Naive thymus-derived CD4-positive, alpha-beta T cell (primary cell): ENCODE measurements at regions of chr7 and their contacts with region 1.

Region 1: GRCh38 chr7:44858161-44858560 is 10.3 kb upstream of the H2AZ2 start:
- DNase-seq: no peak
- ATAC-seq: no peak
- H3K4me3 ChIP-seq: no peak overlapping the region
- H3K4me3 Mint-ChIP-seq: no peak overlapping the region
- H3K27ac ChIP-seq: no peak overlapping the region
- H3K27ac Mint-ChIP-seq: peak overlapping the region in 1 of 9 donors; percentile 9
- H3K4me1 ChIP-seq: peaks cover 0 to 4% of the 10 kb centered on the region in 2 donors
- H3K4me1 Mint-ChIP-seq: peaks cover 0 to 21% (median 5%) of the 10 kb centered on the region in 7 donors
- H3K27me3 ChIP-seq: no peaks in the 10 kb centered on the region
- H3K27me3 Mint-ChIP-seq: peaks cover 0 to 6% (median 0%) of the 10 kb centered on the region in 5 donors

Region 2: GRCh38 chr7:44587843-44588711 is 270.1 kb before region 1 on chr7:
- CTCF ChIA-PET with region 1: no interaction called
- POLR2A ChIA-PET with region 1: no interaction called
- intact Hi-C with region 1: loop called in 1 of 2 experiments (anchors 1 kb)
- DNase-seq: peak in 7 of 9 donors; percentile 35 to 63 (median 60)
- ATAC-seq: peak; percentile 90
- H3K4me3 ChIP-seq: no peak overlapping the region
- H3K4me3 Mint-ChIP-seq: no peak overlapping the region
- H3K27ac ChIP-seq: no peak overlapping the region
- H3K27ac Mint-ChIP-seq: peak overlapping the region in 3 of 9 donors; percentile 6 to 71 (median 25)
- H3K4me1 ChIP-seq: peaks cover 0 to 4% of the 10 kb centered on the region in 2 donors
- H3K4me1 Mint-ChIP-seq: peaks cover 0 to 18% (median 6%) of the 10 kb centered on the region in 7 donors
- H3K27me3 ChIP-seq: no peaks in the 10 kb centered on the region
- H3K27me3 Mint-ChIP-seq: peaks cover 0 to 9% (median 0%) of the 10 kb centered on the region in 5 donors

Region 3: GRCh38 chr7:44678471-44679179 is 179.5 kb before region 1 on chr7:
- CTCF ChIA-PET with region 1: no interaction called
- POLR2A ChIA-PET with region 1: no interaction called
- intact Hi-C with region 1: no loop called
- DNase-seq: no peak
- ATAC-seq: no peak
- H3K4me3 ChIP-seq: no peak overlapping the region
- H3K4me3 Mint-ChIP-seq: no peak overlapping the region
- H3K27ac ChIP-seq: no peak overlapping the region
- H3K27ac Mint-ChIP-seq: peak overlapping the region in 3 of 9 donors; percentile 7 to 59 (median 50)
- H3K4me1 ChIP-seq: no peaks in the 10 kb centered on the region
- H3K4me1 Mint-ChIP-seq: peaks cover 0 to 6% (median 0%) of the 10 kb centered on the region in 7 donors
- H3K27me3 ChIP-seq: no peaks in the 10 kb centered on the region
- H3K27me3 Mint-ChIP-seq: no peaks in the 10 kb centered on the region

Region 4: GRCh38 chr7:44914992-44915607 is 56.9 kb after region 1 on chr7:
- CTCF ChIA-PET with region 1: interaction called, 27 read pairs
- POLR2A ChIA-PET with region 1: interaction called, 6 read pairs
- intact Hi-C with region 1: loop called in 1 of 2 experiments (anchors 1 kb)
- DNase-seq: peak in 8 of 9 donors; percentile 44 to 87 (median 74)
- ATAC-seq: peak; percentile 99
- H3K4me3 ChIP-seq: no peak overlapping the region
- H3K4me3 Mint-ChIP-seq: peak overlapping the region in 7 of 10 donors; percentile 12 to 71 (median 53)
- H3K27ac ChIP-seq: peak overlapping the region; percentile 48
- H3K27ac Mint-ChIP-seq: peak overlapping the region in 8 of 9 donors; percentile 61 to 92 (median 84)
- H3K4me1 ChIP-seq: no peaks in the 10 kb centered on the region
- H3K4me1 Mint-ChIP-seq: peaks cover 0 to 28% (median 5%) of the 10 kb centered on the region in 7 donors
- H3K27me3 ChIP-seq: no peaks in the 10 kb centered on the region
- H3K27me3 Mint-ChIP-seq: no peaks in the 10 kb centered on the region

Region 5: DNA sequence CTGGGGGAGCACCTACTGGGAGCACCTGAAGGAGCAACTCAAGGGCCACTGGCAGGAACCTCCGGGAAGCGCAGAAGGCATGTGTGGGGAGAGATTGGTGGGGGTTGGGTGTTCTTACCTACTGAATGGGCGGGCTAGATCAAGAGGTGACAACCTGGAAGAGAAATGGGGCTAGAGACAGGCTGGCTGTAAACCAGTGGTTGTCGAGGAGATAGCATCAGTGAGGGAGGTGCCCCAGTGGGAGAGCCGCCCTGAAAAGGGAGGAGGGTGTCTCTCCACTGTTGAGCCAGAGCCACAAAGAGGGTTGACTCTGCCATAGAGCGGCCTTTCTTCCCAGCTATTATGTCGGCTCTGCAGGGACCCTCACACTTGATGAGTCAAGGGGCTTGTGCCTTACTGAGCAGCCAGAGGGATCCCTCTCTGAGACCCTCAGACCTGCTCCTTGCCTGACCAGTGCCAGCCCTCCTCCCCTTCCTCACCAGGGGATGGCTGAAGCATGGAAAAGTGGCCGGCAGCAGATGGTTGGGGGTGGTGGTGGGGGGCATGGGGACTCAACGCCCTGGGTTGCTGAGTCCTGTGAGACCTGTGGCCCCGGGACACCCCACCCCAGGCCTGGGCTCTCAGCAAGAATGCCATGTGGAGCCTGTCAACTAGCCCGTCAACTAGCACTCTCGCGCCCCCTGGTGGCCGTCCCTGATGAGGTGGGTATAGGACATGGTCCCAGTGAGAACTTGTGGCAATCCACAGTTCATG is 63.6 kb after region 1 on chr7:
- CTCF ChIA-PET with region 1: interaction called, 27 read pairs
- POLR2A ChIA-PET with region 1: interaction called, 6 read pairs
- intact Hi-C with region 1: loop called (anchors 1 kb)
- DNase-seq: peak; percentile 76 to 98 (median 86)
- ATAC-seq: peak; percentile 99
- H3K4me3 ChIP-seq: no peak overlapping the region
- H3K4me3 Mint-ChIP-seq: no peak overlapping the region
- H3K27ac ChIP-seq: no peak overlapping the region
- H3K27ac Mint-ChIP-seq: peak overlapping the region in 5 of 9 donors; percentile 6 to 78 (median 34)
- H3K4me1 ChIP-seq: peaks cover 0 to 9% of the 10 kb centered on the region in 2 donors
- H3K4me1 Mint-ChIP-seq: peaks cover 0 to 21% (median 0%) of the 10 kb centered on the region in 7 donors
- H3K27me3 ChIP-seq: no peaks in the 10 kb centered on the region
- H3K27me3 Mint-ChIP-seq: peaks cover 0 to 6% (median 0%) of the 10 kb centered on the region in 5 donors

Region 6: GRCh38 chr7:44973610-44974401 is 115.6 kb after region 1 on chr7:
- CTCF ChIA-PET with region 1: interaction called, 11 read pairs
- POLR2A ChIA-PET with region 1: no interaction called
- intact Hi-C with region 1: no loop called
- DNase-seq: peak in 7 of 9 donors; percentile 52 to 70 (median 66)
- ATAC-seq: peak; percentile 31
- H3K4me3 ChIP-seq: no peak overlapping the region
- H3K4me3 Mint-ChIP-seq: peak overlapping the region in 4 of 10 donors; percentile 5 to 23 (median 10)
- H3K27ac ChIP-seq: peak overlapping the region; percentile 83
- H3K27ac Mint-ChIP-seq: peak overlapping the region in 8 of 9 donors; percentile 18 to 88 (median 67)
- H3K4me1 ChIP-seq: peaks cover 28 to 46% of the 10 kb centered on the region in 2 donors
- H3K4me1 Mint-ChIP-seq: peaks cover 29 to 59% (median 40%) of the 10 kb centered on the region in 7 donors
- H3K27me3 ChIP-seq: no peaks in the 10 kb centered on the region
- H3K27me3 Mint-ChIP-seq: no peaks in the 10 kb centered on the region

Region 7: GRCh38 chr7:45033261-45033930 is 175.2 kb after region 1 on chr7:
- CTCF ChIA-PET with region 1: no interaction called
- POLR2A ChIA-PET with region 1: no interaction called
- intact Hi-C with region 1: loop called in 1 of 2 experiments (anchors 5 kb)
- DNase-seq: no peak
- ATAC-seq: peak; percentile 12
- H3K4me3 ChIP-seq: peak overlapping the region; percentile 15
- H3K4me3 Mint-ChIP-seq: peak overlapping the region; percentile 76 to 93 (median 81)
- H3K27ac ChIP-seq: peak overlapping the region; percentile 43
- H3K27ac Mint-ChIP-seq: peak overlapping the region; percentile 48 to 94 (median 84)
- H3K4me1 ChIP-seq: peaks cover 67 to 81% of the 10 kb centered on the region in 2 donors
- H3K4me1 Mint-ChIP-seq: peaks cover 61 to 80% (median 75%) of the 10 kb centered on the region in 7 donors
- H3K27me3 ChIP-seq: no peaks in the 10 kb centered on the region
- H3K27me3 Mint-ChIP-seq: no peaks in the 10 kb centered on the region

Region 8: DNA sequence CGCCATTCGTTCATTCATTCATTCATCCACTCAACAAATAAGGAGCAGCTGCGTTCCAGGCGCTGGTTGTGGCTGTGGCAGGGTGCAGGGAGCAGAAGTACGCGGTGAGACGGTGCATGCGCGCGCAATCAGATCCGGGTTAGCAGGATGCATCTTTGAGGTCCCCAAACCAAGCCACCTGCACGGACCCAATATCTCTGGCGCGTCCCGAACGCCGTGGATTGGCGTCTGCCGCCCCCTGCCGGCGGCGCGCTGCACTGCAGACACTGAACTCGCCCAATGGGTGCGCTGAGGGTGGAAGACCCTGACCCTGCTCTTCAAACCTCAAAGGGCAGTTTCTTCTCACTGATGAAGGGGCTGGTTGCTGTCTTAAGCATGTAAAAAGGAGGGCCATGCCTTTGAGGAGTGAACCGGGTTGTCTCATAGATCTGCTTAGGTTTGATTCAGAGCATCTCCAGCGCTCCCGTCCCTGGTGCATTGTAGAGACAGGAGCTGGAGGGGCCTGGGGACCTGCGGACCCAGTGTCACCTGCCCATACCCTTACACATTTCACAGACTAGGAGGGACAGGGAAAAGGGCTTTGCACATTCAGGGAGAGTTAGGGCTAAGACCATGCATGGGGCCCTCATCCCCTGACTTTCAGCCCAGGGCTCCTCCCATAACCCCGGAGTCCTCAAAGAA is 401.9 kb after region 1 on chr7:
- CTCF ChIA-PET with region 1: no interaction called
- POLR2A ChIA-PET with region 1: no interaction called
- intact Hi-C with region 1: loop called in 1 of 2 experiments (anchors 2 kb)
- DNase-seq: peak; percentile 30 to 80 (median 57)
- ATAC-seq: peak; percentile 82
- H3K4me3 ChIP-seq: no peak overlapping the region
- H3K4me3 Mint-ChIP-seq: no peak overlapping the region
- H3K27ac ChIP-seq: no peak overlapping the region
- H3K27ac Mint-ChIP-seq: no peak overlapping the region
- H3K4me1 ChIP-seq: no peaks in the 10 kb centered on the region
- H3K4me1 Mint-ChIP-seq: peaks cover 0 to 4% (median 0%) of the 10 kb centered on the region in 7 donors
- H3K27me3 ChIP-seq: no peaks in the 10 kb centered on the region
- H3K27me3 Mint-ChIP-seq: peaks cover 10 to 26% (median 20%) of the 10 kb centered on the region in 5 donors